ENCODE measurements at regions of chr6 and their contacts with region 1.

Region 1: GRCh38 chr6:105484238-105485161 is 81.6 kb upstream of the PREP start:
- DNase-seq: no peak
- ATAC-seq: peak; percentile 64
- H3K4me3 ChIP-seq: no peak overlapping the region
- H3K27ac ChIP-seq: peak overlapping the region; percentile 8; the same call in 1 of the 2 replicates
- H3K4me1 ChIP-seq: peaks cover 50% of the 10 kb centered on the region
- H3K27me3 ChIP-seq: no peaks in the 10 kb centered on the region
- CTCF ChIP-seq: peak; percentile 80 to 84 (median 82)
- EP300 ChIP-seq: peak in 1 of 2 experiments; percentile 50; a peak in 2 of 4 replicates
- POLR2A ChIP-seq: no peak
- RAD21 ChIP-seq: peak; percentile 96

Region 2: GRCh38 chr6:105282631-105283585 is 201.6 kb before region 1 on chr6:
- CTCF ChIA-PET with region 1: no interaction called
- POLR2A ChIA-PET with region 1: no interaction called
- RAD21 ChIA-PET with region 1: no interaction called
- SMC1A ChIA-PET with region 1: no interaction called
- in situ Hi-C with region 1: no loop called
- intact Hi-C with region 1: no loop called
- DNase-seq: no peak
- ATAC-seq: no peak
- H3K4me3 ChIP-seq: no peak overlapping the region
- H3K27ac ChIP-seq: no peak overlapping the region
- H3K4me1 ChIP-seq: no peaks in the 10 kb centered on the region
- H3K27me3 ChIP-seq: no peaks in the 10 kb centered on the region
- CTCF ChIP-seq: no peak
- EP300 ChIP-seq: no peak
- POLR2A ChIP-seq: no peak
- RAD21 ChIP-seq: no peak

Region 3: GRCh38 chr6:105468850-105469249 is 15.7 kb before region 1 on chr6:
- CTCF ChIA-PET with region 1: interaction called, 6 read pairs
- POLR2A ChIA-PET with region 1: interaction called, 6 read pairs
- RAD21 ChIA-PET with region 1: interaction called, 7 read pairs
- SMC1A ChIA-PET with region 1: interaction called, 10 read pairs
- in situ Hi-C with region 1: no loop called
- intact Hi-C with region 1: no loop called
- DNase-seq: no peak
- ATAC-seq: peak; percentile 71
- H3K4me3 ChIP-seq: no peak overlapping the region
- H3K27ac ChIP-seq: no peak overlapping the region
- H3K4me1 ChIP-seq: no peaks in the 10 kb centered on the region
- H3K27me3 ChIP-seq: no peaks in the 10 kb centered on the region
- CTCF ChIP-seq: no peak
- EP300 ChIP-seq: no peak
- POLR2A ChIP-seq: no peak
- RAD21 ChIP-seq: no peak

Region 4: DNA sequence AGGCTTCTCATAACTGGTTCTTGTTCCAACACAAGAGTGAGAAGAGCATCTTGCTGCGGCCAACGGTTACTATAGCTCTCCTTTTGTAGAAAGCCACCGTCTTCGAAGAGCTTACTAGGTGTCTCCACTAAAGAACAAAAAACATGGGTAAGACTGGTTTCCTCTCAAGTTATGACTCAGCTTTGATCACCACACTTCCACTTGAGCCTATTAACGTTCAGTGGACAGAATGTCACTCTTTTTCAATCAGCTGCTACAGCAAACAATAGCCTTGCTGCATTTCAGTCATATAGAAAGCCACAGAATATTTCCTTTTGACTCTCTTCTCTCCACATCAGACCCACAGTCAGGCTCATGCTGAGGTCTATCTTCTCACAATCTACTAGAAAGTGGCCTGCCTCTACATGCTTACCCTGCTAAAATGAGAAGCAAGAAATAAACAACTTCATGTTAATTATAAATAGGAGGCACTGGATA is 161.9 kb after region 1 on chr6:
- CTCF ChIA-PET with region 1: interaction called, 20 read pairs
- POLR2A ChIA-PET with region 1: interaction called, 6 read pairs
- RAD21 ChIA-PET with region 1: interaction called, 72 read pairs
- SMC1A ChIA-PET with region 1: interaction called, 57 read pairs
- in situ Hi-C with region 1: loop called (anchors 5 kb)
- intact Hi-C with region 1: loop called (anchors 2 kb)
- DNase-seq: peak; percentile 100
- ATAC-seq: peak; percentile 91
- H3K4me3 ChIP-seq: 0 out of 2 replicates have a peak overlapping the region, but pooled peaks have one; percentile 22
- H3K27ac ChIP-seq: peak overlapping the region; percentile 72
- H3K4me1 ChIP-seq: peaks cover 51% of the 10 kb centered on the region
- H3K27me3 ChIP-seq: no peaks in the 10 kb centered on the region; a peak in 1 of 4 replicates
- CTCF ChIP-seq: no peak
- EP300 ChIP-seq: peak; percentile 100
- POLR2A ChIP-seq: 0 out of 2 replicates have a peak, but pooled peaks have one; percentile 25
- RAD21 ChIP-seq: peak; percentile 32; the same call in 1 of the 2 replicates

Region 5: GRCh38 chr6:105892577-105893262 is 408.2 kb after region 1 on chr6:
- CTCF ChIA-PET with region 1: no interaction called
- POLR2A ChIA-PET with region 1: no interaction called
- RAD21 ChIA-PET with region 1: no interaction called
- SMC1A ChIA-PET with region 1: interaction called, 5 read pairs
- in situ Hi-C with region 1: no loop called
- intact Hi-C with region 1: loop called (anchors 10 kb)
- DNase-seq: peak; percentile 74
- ATAC-seq: peak; percentile 97
- H3K4me3 ChIP-seq: no peak overlapping the region
- H3K27ac ChIP-seq: no peak overlapping the region; the same call in 1 of the 2 replicates
- H3K4me1 ChIP-seq: peaks cover 12% of the 10 kb centered on the region
- H3K27me3 ChIP-seq: no peaks in the 10 kb centered on the region; a peak in 1 of 4 replicates
- CTCF ChIP-seq: no peak
- EP300 ChIP-seq: peak; percentile 66 to 85; a peak in 3 of 4 replicates
- POLR2A ChIP-seq: no peak
- RAD21 ChIP-seq: no peak

Region 6: DNA sequence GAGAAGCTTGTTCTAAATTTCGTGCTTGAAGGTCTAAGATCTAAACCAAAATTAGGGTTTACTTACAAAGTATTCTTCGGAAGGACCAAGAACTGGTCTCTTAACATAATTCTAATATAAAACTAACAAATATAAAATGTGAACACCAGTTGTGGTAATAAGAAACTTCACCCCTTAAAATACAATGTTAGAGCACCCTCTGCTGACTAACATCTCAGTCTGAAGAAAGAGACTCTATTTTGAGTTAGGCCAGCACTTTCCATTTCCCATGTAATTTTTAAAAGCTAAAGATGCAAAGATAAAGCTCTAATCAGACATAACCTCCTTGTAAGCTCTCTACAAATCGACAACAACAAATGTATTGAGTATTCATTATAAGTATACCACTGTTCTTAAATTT is 816.4 kb after region 1 on chr6:
- CTCF ChIA-PET with region 1: interaction called, 5 read pairs
- POLR2A ChIA-PET with region 1: no interaction called
- RAD21 ChIA-PET with region 1: interaction called, 18 read pairs
- SMC1A ChIA-PET with region 1: no interaction called
- in situ Hi-C with region 1: loop called (anchors 5 kb)
- intact Hi-C with region 1: loop called (anchors 5 kb)
- DNase-seq: peak; percentile 12
- ATAC-seq: peak; percentile 61
- H3K4me3 ChIP-seq: no peak overlapping the region
- H3K27ac ChIP-seq: no peak overlapping the region
- H3K4me1 ChIP-seq: no peaks in the 10 kb centered on the region
- H3K27me3 ChIP-seq: no peaks in the 10 kb centered on the region
- CTCF ChIP-seq: peak; percentile 23 to 56 (median 41); a peak in 4 of 6 replicates
- EP300 ChIP-seq: no peak
- POLR2A ChIP-seq: no peak
- RAD21 ChIP-seq: peak; percentile 68

Measured in GM12878 (cell line).